Activated T-helper 1 cell treated with anti-CD3 and anti-CD28 coated beads, Interleukin-12 subunit alpha, Interleukin-12 subunit beta, Interleukin-2, Interleukin-4 antibody, amounts not matched to agents 30 ng/mL and 10 ng/mL and 1 ng/mL, durations not matched to agents 14 hours and 24 hours and 36 hours (primary cell): ENCODE measurements at regions of chr9 and their contacts with region 1.

Region 1: GRCh38 chr9:15422372-15423230 is at the start of gene SNAPC3:
- DNase-seq: peak; percentile 94
- H3K4me3 Mint-ChIP-seq: peak within 1 kb of the TSS; percentile 96
- H3K27ac Mint-ChIP-seq: peak within 1 kb of the TSS; percentile 92
- H3K4me1 Mint-ChIP-seq: peaks cover 50% of the 10 kb centered on the region
- H3K27me3 Mint-ChIP-seq: peaks cover 3% of the 10 kb centered on the region
- total RNA-seq, gene SNAPC3: 27.1 and 30.5 TPM in 2 replicates

Region 2: DNA sequence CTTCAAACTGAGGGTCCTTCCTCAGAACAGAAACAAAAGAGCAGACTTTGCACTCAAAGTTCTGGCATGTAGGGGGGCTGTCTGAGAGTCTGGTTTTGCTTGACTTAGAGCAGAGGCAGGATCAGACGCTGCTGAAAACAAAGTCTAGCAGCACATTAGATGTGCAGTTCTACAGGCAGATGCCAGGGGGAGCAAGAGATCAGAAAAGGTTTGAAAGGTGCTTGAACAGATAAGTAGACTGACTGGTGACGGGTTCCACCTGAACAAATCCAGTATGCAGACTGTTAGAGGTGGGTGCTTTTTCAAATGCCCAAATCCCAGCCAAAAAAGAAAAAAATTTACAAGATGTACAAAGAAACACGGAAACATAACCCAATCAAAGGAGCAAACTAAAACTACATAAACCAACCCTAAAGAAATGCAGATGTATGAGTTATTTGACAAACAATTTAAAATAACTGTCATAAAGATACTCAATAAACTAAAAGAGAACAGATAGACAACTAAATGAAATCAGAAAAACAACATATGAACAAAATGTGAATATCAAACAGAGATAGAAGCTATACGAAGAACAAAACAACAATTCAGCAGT is 317.7 kb before region 1 on chr9:
- intact Hi-C with region 1: loop called (anchors 5 kb)
- DNase-seq: peak; percentile 17
- H3K4me3 Mint-ChIP-seq: no peak overlapping the region
- H3K27ac Mint-ChIP-seq: no peak overlapping the region
- H3K4me1 Mint-ChIP-seq: no peaks in the 10 kb centered on the region
- H3K27me3 Mint-ChIP-seq: peaks cover 21% of the 10 kb centered on the region

Region 3: DNA sequence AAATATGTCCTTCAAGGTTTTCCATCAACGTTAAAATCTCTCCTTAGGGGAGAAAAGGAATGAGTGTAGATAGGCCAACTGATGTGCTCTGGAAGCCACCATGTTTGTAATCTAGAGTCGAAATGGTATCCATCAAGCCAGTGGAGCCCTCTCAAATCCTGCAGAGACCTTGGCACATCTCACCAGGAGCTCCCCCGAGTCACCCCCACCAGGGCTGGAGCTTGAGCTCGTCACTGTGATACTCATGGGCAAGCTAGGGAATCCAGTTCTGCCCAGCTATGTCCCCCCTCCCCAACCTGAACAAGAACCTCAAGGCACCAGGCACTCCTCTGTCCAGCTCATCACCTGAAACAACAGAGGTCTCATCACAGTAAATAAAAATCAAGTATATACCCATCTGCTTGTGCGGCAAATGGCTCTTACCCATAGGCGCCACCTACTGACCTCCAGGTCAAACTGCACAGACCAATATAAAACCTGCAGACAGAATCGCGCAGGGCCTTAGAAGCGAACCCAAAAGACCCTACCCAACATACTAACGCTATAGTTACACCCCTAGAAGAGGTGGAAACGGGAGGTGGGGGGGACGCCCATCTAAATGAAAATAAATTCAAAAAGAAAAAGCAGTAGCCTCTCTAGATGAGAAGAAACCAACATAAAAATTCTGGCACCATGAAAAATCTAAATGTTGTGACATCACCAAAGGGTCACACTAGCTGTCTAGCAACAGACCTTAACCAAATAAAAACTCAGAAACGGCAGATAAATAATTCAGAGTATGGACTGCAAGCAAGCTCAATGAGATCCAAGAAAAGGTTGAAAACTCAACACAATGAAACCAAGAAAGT is 190.6 kb before region 1 on chr9:
- intact Hi-C with region 1: loop called (anchors 1 kb)
- DNase-seq: no peak
- H3K4me3 Mint-ChIP-seq: no peak overlapping the region
- H3K27ac Mint-ChIP-seq: peak overlapping the region; percentile 37
- H3K4me1 Mint-ChIP-seq: peaks cover 35% of the 10 kb centered on the region
- H3K27me3 Mint-ChIP-seq: no peaks in the 10 kb centered on the region

Region 4: DNA sequence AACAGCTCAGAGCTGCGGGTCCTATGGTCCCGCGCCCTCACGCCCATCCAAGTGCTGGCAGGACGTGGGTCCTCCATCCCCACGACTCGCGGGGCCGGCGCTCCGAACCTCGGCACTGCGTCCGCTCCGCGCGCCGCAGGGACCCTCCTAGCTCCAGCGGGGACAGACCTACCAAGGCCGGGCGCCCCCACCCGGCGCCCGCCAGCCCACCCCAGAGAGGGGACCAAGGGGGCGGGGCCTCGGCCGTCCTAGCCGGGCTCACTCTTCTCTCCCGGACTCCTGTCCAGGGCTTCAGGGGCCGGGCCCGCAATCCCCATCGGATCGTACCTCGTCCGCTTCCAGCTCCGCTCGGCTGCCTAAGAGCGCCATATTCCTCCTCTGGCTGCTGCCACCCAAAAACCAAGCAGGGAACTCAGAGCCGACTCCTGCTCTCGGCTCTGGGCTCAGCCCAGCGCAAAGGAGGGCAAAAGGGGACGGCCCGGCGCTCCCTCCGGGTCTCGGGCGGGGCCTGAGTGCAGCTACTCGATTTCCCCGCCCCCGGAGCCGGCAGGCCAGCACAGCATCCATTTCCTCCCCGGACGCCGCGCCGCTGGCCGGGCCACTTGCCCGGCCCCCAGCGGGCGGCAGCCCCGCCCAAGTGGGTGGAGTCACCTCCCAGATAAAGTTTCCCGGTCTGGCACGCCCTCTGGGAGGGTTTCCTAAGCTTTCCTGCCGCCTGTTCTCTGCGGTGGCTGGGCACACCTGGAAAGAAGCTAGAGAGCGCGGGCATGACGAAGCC is 115.7 kb before region 1 on chr9 and contains the start of gene TTC39B:
- intact Hi-C with region 1: loop called (anchors 1 kb)
- DNase-seq: peak; percentile 82
- H3K4me3 Mint-ChIP-seq: peak within 1 kb of the TSS; percentile 98
- H3K27ac Mint-ChIP-seq: peak within 1 kb of the TSS; percentile 95
- H3K4me1 Mint-ChIP-seq: peaks cover 57% of the 10 kb centered on the region
- H3K27me3 Mint-ChIP-seq: no peaks in the 10 kb centered on the region
- total RNA-seq, gene TTC39B: 23.8 and 26.1 TPM in 2 replicates

Region 5: GRCh38 chr9:15529566-15530324 is 107.1 kb after region 1 on chr9:
- intact Hi-C with region 1: loop called (anchors 5 kb)
- DNase-seq: no peak
- H3K4me3 Mint-ChIP-seq: no peak overlapping the region
- H3K27ac Mint-ChIP-seq: no peak overlapping the region
- H3K4me1 Mint-ChIP-seq: no peaks in the 10 kb centered on the region
- H3K27me3 Mint-ChIP-seq: peaks cover 4% of the 10 kb centered on the region